ENCODE measurements at regions of chr2 and their contacts with region 1.

Region 1: DNA sequence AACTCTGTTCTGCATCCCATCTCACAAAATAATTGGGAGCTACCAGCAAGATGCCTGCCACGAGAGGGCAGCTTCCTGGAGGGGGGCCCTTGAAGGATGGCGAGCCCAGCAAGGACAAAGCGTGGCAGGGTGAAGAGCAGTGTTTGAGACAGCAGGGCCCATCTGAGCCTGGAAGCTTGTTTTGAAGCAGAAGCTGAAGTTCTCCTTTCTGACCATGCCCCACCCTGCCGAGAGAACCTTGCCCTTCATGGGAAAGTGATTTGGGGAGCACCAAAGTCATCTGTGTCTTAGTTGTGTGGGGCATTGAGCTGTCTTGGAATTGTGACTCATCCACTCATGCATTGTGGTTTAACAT is 216.3 kb downstream of the BCL11A start:
- DNase-seq: peak in 1 of 2 experiments; percentile 25
- H3K4me3 ChIP-seq: no peak overlapping the region
- H3K4me3 Mint-ChIP-seq: no peak overlapping the region
- H3K27ac Mint-ChIP-seq: no peak overlapping the region
- H3K4me1 ChIP-seq: no peaks in the 10 kb centered on the region
- H3K4me1 Mint-ChIP-seq: peaks cover 7% of the 10 kb centered on the region
- H3K27me3 ChIP-seq: no peaks in the 10 kb centered on the region
- H3K27me3 Mint-ChIP-seq: no peaks in the 10 kb centered on the region
- CTCF ChIP-seq: peak in 1 of 2 experiments; percentile 32

Region 2: DNA sequence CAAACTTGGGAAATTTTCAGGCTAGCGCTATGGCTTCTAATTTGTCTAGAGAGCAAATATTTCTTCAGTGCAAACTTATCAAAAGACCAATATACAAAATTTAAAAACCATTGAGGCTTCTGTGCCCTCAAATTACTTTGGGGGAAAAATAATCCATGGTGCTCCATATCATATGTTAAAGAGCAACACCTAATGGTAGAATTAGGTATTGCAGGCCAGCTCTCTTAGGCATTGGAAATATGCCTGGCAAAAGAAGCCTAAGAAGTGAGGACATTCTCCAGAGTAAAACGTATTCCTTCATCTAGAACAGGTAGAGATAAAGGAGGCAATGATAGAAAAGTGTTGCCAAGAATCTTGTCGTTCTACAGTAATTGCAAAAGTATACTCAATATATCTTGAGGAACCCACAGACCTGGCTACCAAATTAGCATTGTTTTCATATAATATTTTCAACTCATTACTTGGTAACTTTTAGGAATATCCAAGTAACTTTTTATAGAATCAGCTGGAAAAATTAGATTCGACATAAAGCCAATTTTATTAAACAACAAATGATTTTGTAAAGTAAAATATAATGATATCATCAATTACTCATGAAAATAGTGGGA is 184.8 kb before region 1 on chr2:
- CTCF ChIA-PET with region 1: no interaction called
- POLR2A ChIA-PET with region 1: no interaction called
- intact Hi-C with region 1: no loop called
- DNase-seq: peak in 1 of 2 experiments; percentile 45
- H3K4me3 ChIP-seq: no peak overlapping the region
- H3K4me3 Mint-ChIP-seq: no peak overlapping the region
- H3K27ac Mint-ChIP-seq: no peak overlapping the region
- H3K4me1 ChIP-seq: no peaks in the 10 kb centered on the region
- H3K4me1 Mint-ChIP-seq: no peaks in the 10 kb centered on the region
- H3K27me3 ChIP-seq: no peaks in the 10 kb centered on the region
- H3K27me3 Mint-ChIP-seq: no peaks in the 10 kb centered on the region
- CTCF ChIP-seq: peak; percentile 80 to 90

Region 3: DNA sequence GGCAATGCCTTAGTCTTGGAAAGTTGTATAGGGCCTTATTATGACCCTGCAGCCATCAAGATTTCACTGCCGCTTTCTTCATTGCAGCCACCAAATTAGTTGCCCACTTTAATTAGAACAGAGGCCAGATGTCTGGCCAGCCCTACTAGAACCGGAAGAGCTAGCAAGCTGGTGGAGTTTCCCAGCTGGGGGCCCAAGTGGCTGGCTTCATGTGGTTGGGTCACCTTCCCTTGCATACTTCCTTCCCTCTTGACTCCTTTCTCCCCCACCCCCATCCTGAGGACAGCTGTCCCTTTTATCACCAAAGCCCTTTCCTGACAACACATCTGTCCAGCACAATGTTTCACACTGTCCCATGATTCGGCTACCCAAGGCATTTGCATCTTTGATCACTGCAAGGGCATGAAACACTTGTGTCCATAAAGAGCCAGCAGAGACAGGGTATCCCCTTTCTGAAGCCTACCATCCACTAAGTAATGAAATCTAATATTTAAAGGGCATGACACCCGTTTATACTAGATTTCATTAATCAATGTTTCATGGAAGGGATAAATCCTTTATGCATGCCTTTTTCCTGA is 29.1 kb after region 1 on chr2:
- CTCF ChIA-PET with region 1: no interaction called
- POLR2A ChIA-PET with region 1: no interaction called
- intact Hi-C with region 1: loop called (anchors 1 kb)
- DNase-seq: no peak
- H3K4me3 ChIP-seq: no peak overlapping the region
- H3K4me3 Mint-ChIP-seq: peak overlapping the region; percentile 55
- H3K27ac Mint-ChIP-seq: peak overlapping the region; percentile 91
- H3K4me1 ChIP-seq: peaks cover 30% of the 10 kb centered on the region
- H3K4me1 Mint-ChIP-seq: peaks cover 30% of the 10 kb centered on the region
- H3K27me3 ChIP-seq: no peaks in the 10 kb centered on the region
- H3K27me3 Mint-ChIP-seq: no peaks in the 10 kb centered on the region
- CTCF ChIP-seq: no peak

Region 4: GRCh38 chr2:60391649-60392375 is 54.7 kb after region 1 on chr2:
- CTCF ChIA-PET with region 1: no interaction called
- POLR2A ChIA-PET with region 1: no interaction called
- intact Hi-C with region 1: no loop called
- DNase-seq: no peak
- H3K4me3 ChIP-seq: no peak overlapping the region
- H3K4me3 Mint-ChIP-seq: no peak overlapping the region
- H3K27ac Mint-ChIP-seq: no peak overlapping the region
- H3K4me1 ChIP-seq: no peaks in the 10 kb centered on the region
- H3K4me1 Mint-ChIP-seq: no peaks in the 10 kb centered on the region
- H3K27me3 ChIP-seq: no peaks in the 10 kb centered on the region
- H3K27me3 Mint-ChIP-seq: peaks cover 2% of the 10 kb centered on the region
- CTCF ChIP-seq: no peak

Region 5: GRCh38 chr2:60433018-60433616 is 96.0 kb after region 1 on chr2:
- CTCF ChIA-PET with region 1: no interaction called
- POLR2A ChIA-PET with region 1: no interaction called
- intact Hi-C with region 1: no loop called
- DNase-seq: no peak
- H3K4me3 ChIP-seq: no peak overlapping the region
- H3K4me3 Mint-ChIP-seq: no peak overlapping the region
- H3K27ac Mint-ChIP-seq: peak overlapping the region; percentile 17
- H3K4me1 ChIP-seq: peaks cover 24% of the 10 kb centered on the region
- H3K4me1 Mint-ChIP-seq: peaks cover 24% of the 10 kb centered on the region
- H3K27me3 ChIP-seq: no peaks in the 10 kb centered on the region
- H3K27me3 Mint-ChIP-seq: no peaks in the 10 kb centered on the region
- CTCF ChIP-seq: no peak